ENCODE measurements at regions of chr18 and their contacts with region 1.

Region 1: DNA sequence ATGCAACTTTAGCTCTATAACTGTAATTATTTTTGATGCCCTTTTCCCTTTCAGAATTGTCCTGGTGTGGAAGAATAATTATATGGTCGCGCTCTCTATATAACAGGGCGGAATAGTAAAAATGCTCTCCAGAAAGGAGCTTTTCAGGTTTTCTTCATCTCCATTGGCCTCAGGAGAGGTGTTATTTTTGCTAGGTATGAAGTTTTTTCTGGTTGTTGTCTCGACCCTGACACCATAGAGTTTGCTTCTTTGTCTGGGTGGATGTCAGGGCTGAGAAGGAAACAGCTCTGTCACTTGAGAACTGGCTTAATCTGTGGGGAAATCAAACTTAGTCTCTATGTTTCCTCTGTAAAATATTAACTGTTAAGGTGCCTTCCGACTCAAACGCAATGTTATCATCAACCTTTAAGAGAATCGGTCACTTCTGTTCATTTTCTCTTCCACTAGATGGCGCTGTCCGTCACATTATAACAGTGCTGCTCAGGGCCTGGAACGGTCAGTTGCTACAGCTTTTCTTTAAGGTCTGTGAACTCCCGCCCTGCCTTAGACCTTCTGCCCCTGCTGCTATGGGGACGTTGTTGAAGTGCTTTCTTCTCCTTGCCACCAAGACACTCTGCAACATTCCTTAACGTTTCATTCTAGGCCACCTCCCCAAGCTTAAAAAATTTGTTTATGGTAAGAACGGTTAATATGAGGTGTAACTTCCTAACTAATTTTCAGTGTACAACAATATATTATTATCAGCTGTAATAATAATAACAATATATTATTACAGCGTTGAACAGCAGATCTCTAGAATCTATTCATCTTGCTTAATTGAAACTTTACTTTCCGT is 23.8 kb upstream of the SERPINB12 start:
- DNase-seq: peak; percentile 78
- ATAC-seq: peak; percentile 98
- H3K4me3 ChIP-seq: no peak overlapping the region
- H3K27ac ChIP-seq: no peak overlapping the region
- H3K4me1 ChIP-seq: no peaks in the 10 kb centered on the region
- H3K27me3 ChIP-seq: no peaks in the 10 kb centered on the region
- CTCF ChIP-seq: peak; percentile 50 to 76 (median 74); a peak in 5 of 6 replicates
- POLR2A ChIP-seq: no peak
- RAD21 ChIP-seq: peak; percentile 90

Region 2: DNA sequence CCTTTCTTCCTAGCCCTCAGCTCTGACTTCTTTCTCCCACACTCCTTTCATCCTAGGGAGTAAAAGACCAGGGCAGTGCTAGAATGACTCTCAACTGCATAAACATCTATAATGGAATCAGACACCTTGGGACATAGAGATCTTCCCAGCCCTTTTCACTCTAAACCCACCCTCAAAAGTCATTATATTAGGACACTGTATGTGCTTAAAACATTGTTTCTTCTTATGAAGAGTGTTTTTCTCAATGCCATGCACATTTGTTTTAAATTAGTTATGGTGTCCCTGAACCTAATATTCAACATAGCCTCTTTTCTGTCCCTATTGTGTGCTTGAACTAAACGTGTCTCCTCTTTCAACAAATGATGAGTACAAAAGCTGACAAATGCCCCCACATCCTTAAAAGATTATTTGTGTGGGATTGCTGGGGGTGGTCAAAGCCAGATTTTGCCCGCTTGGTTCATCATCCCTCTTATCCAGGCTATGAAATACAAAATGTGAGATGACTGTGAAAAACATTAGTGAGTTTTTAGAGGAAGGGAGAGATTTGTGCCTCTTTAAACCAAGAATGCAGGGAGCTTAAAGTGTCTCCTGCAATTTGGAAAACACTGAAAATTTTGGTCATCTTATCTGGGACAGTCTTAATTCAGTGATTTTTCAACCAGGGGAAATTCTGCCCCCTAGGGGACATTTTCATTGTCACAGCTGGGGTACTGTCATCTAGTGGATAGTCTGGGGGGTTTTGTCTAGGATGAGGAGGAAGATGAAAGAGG is 12.6 kb before region 1 on chr18:
- CTCF ChIA-PET with region 1: interaction called, 10 read pairs
- POLR2A ChIA-PET with region 1: interaction called, 4 read pairs
- RAD21 ChIA-PET with region 1: no interaction called
- intact Hi-C with region 1: no loop called
- DNase-seq: peak; percentile 19
- ATAC-seq: peak; percentile 92
- H3K4me3 ChIP-seq: no peak overlapping the region
- H3K27ac ChIP-seq: no peak overlapping the region
- H3K4me1 ChIP-seq: no peaks in the 10 kb centered on the region
- H3K27me3 ChIP-seq: no peaks in the 10 kb centered on the region
- CTCF ChIP-seq: peak; percentile 72 to 84 (median 79)
- POLR2A ChIP-seq: no peak
- RAD21 ChIP-seq: peak; percentile 68

Region 3: DNA sequence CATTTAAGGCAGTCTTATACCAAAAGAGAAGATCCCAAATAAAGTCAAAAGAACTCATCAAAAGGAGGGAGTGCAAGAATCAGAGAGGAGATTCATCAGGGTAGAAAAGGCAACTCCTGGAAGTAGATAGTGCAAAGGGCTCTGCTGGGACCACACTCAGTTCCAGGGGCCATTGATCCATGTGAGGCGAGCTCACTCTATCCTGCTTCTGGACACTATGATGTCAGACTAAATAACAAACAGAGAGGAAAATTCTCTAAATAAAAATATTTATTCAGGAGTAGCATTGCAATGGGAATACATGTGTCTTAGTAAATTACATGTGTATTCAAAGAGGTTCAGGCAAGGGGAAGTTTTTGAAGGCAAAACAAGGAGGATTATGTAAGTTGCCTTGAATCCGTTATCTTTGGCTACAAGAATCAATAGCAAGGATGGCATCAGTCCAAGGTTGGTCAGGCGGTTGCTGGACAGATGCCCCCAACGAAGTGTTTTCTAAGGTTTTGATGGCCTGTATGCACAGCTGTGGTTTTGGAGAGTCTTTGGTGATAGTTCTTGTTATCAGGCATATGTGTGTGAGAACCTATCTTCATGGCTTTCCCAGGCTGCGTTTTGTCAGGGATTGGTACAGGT is 10.6 kb after region 1 on chr18:
- CTCF ChIA-PET with region 1: interaction called, 20 read pairs
- POLR2A ChIA-PET with region 1: no interaction called
- RAD21 ChIA-PET with region 1: no interaction called
- intact Hi-C with region 1: no loop called
- DNase-seq: no peak
- ATAC-seq: no peak
- H3K4me3 ChIP-seq: no peak overlapping the region
- H3K27ac ChIP-seq: no peak overlapping the region
- H3K4me1 ChIP-seq: no peaks in the 10 kb centered on the region
- H3K27me3 ChIP-seq: no peaks in the 10 kb centered on the region
- CTCF ChIP-seq: no peak
- POLR2A ChIP-seq: no peak
- RAD21 ChIP-seq: no peak

Region 4: GRCh38 chr18:63676526-63676925 is 158.1 kb after region 1 on chr18:
- CTCF ChIA-PET with region 1: interaction called, 6 read pairs
- POLR2A ChIA-PET with region 1: no interaction called
- RAD21 ChIA-PET with region 1: no interaction called
- intact Hi-C with region 1: loop called (anchors 1 kb)
- DNase-seq: peak; percentile 44
- ATAC-seq: peak; percentile 99
- H3K4me3 ChIP-seq: no peak overlapping the region
- H3K27ac ChIP-seq: no peak overlapping the region
- H3K4me1 ChIP-seq: no peaks in the 10 kb centered on the region
- H3K27me3 ChIP-seq: no peaks in the 10 kb centered on the region
- CTCF ChIP-seq: peak; percentile 58 to 82 (median 70); a peak in 5 of 6 replicates
- POLR2A ChIP-seq: no peak
- RAD21 ChIP-seq: peak; percentile 77

Region 5: DNA sequence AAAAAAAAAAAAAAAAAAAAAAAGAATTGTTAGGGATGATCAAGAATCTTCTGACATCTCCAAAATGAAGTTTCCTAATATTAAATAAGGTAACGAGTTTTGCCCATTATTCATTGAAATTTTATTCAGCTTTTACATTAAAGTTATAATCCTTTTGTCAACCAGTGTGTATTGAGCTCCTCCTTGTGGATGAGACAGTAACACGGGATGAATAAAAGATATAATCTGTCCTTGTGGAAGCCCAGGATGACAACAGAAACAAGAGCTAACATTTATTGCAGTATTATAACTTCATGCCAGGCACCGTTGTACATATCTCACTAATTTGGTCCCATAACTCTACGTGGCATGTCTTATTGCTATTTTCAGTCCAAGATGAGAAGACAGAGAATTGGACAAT is 223.4 kb after region 1 on chr18:
- CTCF ChIA-PET with region 1: interaction called, 82 read pairs
- POLR2A ChIA-PET with region 1: no interaction called
- RAD21 ChIA-PET with region 1: interaction called, 12 to 15 read pairs
- intact Hi-C with region 1: loop called (anchors 1 kb)
- DNase-seq: no peak
- ATAC-seq: no peak
- H3K4me3 ChIP-seq: no peak overlapping the region
- H3K27ac ChIP-seq: no peak overlapping the region
- H3K4me1 ChIP-seq: peaks cover 3 to 11% of the 10 kb centered on the region in 2 experiments; a peak in 3 of 4 replicates
- H3K27me3 ChIP-seq: no peaks in the 10 kb centered on the region
- CTCF ChIP-seq: peak; percentile 38 to 72 (median 51); a peak in 4 of 6 replicates
- POLR2A ChIP-seq: no peak
- RAD21 ChIP-seq: peak; percentile 78

Region 6: DNA sequence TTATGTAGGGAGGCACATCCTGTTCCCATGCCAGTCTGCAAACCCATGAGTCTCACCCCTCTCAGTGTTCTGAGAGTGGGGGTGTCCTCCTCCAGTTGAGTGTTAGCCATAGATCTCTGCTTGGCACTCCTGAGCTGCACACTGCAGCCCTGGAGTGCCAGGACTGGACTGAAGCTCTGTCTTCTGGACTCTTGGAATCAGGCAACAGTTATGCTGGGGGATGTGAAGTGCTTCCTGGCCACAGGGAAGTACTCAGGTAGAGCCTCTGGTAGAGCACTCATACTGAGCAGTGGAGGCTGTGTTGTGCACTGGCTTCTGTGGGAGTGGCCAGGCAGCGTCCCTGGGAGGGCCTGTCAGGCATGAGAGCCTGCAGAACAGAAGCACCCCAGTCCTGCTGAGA is 299.8 kb after region 1 on chr18:
- CTCF ChIA-PET with region 1: no interaction called
- POLR2A ChIA-PET with region 1: no interaction called
- RAD21 ChIA-PET with region 1: no interaction called
- intact Hi-C with region 1: no loop called
- DNase-seq: no peak
- ATAC-seq: no peak
- H3K4me3 ChIP-seq: no peak overlapping the region
- H3K27ac ChIP-seq: no peak overlapping the region
- H3K4me1 ChIP-seq: no peaks in the 10 kb centered on the region
- H3K27me3 ChIP-seq: no peaks in the 10 kb centered on the region
- CTCF ChIP-seq: no peak
- POLR2A ChIP-seq: no peak
- RAD21 ChIP-seq: no peak

Region 7: GRCh38 chr18:63936156-63936931 is 417.9 kb after region 1 on chr18:
- CTCF ChIA-PET with region 1: interaction called, 15 read pairs
- POLR2A ChIA-PET with region 1: no interaction called
- RAD21 ChIA-PET with region 1: interaction called in 1 of 2 experiments, 5 read pairs
- intact Hi-C with region 1: loop called (anchors 2 kb)
- DNase-seq: peak; percentile 64
- ATAC-seq: peak; percentile 100
- H3K4me3 ChIP-seq: peak overlapping the region; percentile 22 to 37
- H3K27ac ChIP-seq: no peak overlapping the region
- H3K4me1 ChIP-seq: peaks cover 0 to 10% of the 10 kb centered on the region in 2 experiments; a peak in 1 of 4 replicates
- H3K27me3 ChIP-seq: no peaks in the 10 kb centered on the region
- CTCF ChIP-seq: peak; percentile 63 to 78 (median 71); a peak in 5 of 6 replicates
- POLR2A ChIP-seq: no peak
- RAD21 ChIP-seq: peak; percentile 73

Region 8: DNA sequence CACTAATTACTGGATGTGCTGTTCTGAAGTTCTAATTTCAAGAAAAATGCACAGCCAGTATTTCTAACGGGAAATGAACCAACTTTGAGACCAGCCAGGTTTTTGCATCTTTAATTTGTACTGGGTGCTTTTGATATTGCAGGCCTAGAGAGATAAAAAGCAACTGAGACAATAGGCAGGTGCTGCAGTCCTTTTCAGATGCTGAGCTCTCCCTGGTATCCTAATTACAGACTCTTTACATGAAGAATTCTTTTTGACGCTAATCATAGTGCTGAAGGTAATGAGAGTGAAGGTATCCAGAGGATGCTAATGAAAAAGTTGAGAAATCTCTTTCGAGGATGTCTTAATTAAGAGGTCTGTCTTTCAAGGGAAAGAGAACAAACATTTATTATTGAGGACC is 536.6 kb after region 1 on chr18:
- CTCF ChIA-PET with region 1: no interaction called
- POLR2A ChIA-PET with region 1: no interaction called
- RAD21 ChIA-PET with region 1: no interaction called
- intact Hi-C with region 1: no loop called
- DNase-seq: no peak
- ATAC-seq: no peak
- H3K4me3 ChIP-seq: no peak overlapping the region
- H3K27ac ChIP-seq: no peak overlapping the region
- H3K4me1 ChIP-seq: no peaks in the 10 kb centered on the region
- H3K27me3 ChIP-seq: no peaks in the 10 kb centered on the region
- CTCF ChIP-seq: no peak
- POLR2A ChIP-seq: no peak
- RAD21 ChIP-seq: no peak

Region 9: DNA sequence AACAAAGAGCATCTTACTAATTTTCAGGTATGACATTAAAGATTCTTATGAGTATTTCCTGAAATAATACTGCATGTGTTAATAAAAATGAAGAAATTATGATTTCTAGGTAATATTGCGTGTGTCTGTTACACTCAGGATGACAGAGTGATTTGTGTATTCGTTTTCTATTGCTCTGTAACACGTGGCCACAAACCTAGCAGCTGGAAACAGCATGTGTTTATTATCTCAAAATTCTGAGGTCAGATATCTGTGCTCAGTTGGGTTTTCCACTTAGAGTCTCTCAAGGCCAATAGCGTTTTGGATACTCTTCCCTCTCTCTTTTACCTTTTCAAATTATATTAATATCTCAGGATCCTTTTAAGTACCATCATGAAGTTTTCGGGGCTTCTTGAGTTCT is 1564.5 kb after region 1 on chr18:
- CTCF ChIA-PET with region 1: no interaction called
- POLR2A ChIA-PET with region 1: no interaction called
- RAD21 ChIA-PET with region 1: no interaction called
- intact Hi-C with region 1: no loop called
- DNase-seq: no peak
- ATAC-seq: no peak
- H3K4me3 ChIP-seq: no peak overlapping the region
- H3K27ac ChIP-seq: no peak overlapping the region
- H3K4me1 ChIP-seq: no peaks in the 10 kb centered on the region
- H3K27me3 ChIP-seq: no peaks in the 10 kb centered on the region
- CTCF ChIP-seq: no peak
- POLR2A ChIP-seq: no peak
- RAD21 ChIP-seq: no peak

Measured in HCT116 (cell line).